Calu3 (cell line): ENCODE measurements at regions of chr15 and their contacts with region 1.

Region 1: DNA sequence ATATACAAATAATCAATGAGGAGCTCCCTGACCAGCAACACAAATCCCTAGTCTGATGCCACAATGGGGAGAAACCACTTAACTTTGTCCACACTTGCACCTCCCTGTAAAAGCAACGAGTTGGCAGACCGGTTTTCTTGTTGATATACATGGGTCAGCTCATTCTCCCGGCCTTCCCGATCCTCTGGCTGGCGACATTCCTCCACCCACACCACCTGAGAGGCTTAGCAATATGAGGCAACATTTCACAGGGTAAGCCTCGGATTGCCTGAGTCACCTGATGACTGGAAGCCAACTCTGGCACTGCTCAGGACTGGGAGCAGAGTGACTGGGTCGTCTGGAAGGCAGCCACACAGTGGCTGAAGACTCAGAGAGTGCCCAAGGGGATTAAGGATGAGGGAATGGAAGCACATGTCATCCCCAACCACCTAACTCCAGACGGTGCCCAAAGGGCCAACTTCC is 9.9 kb downstream of the HOMER2 start:
- DNase-seq: peak; percentile 89
- H3K4me3 Mint-ChIP-seq: peak overlapping the region; percentile 27
- H3K27ac Mint-ChIP-seq: peak overlapping the region; percentile 6
- H3K4me1 Mint-ChIP-seq: peaks cover 55% of the 10 kb centered on the region
- H3K27me3 Mint-ChIP-seq: no peaks in the 10 kb centered on the region
- CTCF ChIP-seq: no peak

Region 2: DNA sequence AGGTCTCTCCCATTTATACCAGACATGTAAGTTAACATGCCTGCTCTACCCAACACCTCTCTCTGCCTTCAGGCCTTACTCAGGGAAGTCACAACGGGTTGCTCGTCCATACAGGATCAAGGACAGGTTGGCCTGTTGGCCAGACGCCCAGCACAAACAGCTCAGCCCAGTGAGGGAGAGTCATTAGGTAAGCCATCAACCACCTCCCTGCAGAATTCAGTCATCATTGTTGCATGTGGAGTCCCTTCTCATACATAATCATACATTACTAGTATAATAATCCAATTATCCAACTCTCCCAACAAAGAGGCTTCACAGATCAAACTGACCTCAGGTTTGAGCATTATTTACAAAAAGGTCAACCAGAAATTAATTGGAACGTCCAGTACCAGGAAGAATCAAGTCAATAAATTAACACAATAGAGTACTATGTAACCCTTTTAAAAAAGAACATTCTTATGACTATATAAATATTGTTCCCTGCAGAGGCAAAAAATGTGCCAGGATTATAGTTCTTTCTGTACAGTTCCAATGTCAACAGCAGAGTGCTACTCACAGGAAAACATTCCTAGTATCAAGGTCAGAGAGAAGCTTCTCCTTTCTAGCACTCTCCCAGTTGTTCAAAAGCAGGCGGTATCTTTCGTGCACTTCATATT is 23.3 kb before region 1 on chr15:
- CTCF ChIA-PET with region 1: interaction called, 14 read pairs
- intact Hi-C with region 1: no loop called
- DNase-seq: peak; percentile 89
- H3K4me3 Mint-ChIP-seq: peak overlapping the region; percentile 6
- H3K27ac Mint-ChIP-seq: peak overlapping the region; percentile 79
- H3K4me1 Mint-ChIP-seq: peaks cover 50% of the 10 kb centered on the region
- H3K27me3 Mint-ChIP-seq: no peaks in the 10 kb centered on the region
- CTCF ChIP-seq: no peak

Region 3: GRCh38 chr15:82928711-82929110 is 13.9 kb before region 1 on chr15:
- CTCF ChIA-PET with region 1: interaction called, 11 read pairs
- intact Hi-C with region 1: no loop called
- DNase-seq: no peak
- H3K4me3 Mint-ChIP-seq: no peak overlapping the region
- H3K27ac Mint-ChIP-seq: no peak overlapping the region
- H3K4me1 Mint-ChIP-seq: peaks cover 7% of the 10 kb centered on the region
- H3K27me3 Mint-ChIP-seq: no peaks in the 10 kb centered on the region
- CTCF ChIP-seq: no peak